GM12878 (cell line): ENCODE measurements at regions of chr17 and their contacts with region 1.

Region 1: DNA sequence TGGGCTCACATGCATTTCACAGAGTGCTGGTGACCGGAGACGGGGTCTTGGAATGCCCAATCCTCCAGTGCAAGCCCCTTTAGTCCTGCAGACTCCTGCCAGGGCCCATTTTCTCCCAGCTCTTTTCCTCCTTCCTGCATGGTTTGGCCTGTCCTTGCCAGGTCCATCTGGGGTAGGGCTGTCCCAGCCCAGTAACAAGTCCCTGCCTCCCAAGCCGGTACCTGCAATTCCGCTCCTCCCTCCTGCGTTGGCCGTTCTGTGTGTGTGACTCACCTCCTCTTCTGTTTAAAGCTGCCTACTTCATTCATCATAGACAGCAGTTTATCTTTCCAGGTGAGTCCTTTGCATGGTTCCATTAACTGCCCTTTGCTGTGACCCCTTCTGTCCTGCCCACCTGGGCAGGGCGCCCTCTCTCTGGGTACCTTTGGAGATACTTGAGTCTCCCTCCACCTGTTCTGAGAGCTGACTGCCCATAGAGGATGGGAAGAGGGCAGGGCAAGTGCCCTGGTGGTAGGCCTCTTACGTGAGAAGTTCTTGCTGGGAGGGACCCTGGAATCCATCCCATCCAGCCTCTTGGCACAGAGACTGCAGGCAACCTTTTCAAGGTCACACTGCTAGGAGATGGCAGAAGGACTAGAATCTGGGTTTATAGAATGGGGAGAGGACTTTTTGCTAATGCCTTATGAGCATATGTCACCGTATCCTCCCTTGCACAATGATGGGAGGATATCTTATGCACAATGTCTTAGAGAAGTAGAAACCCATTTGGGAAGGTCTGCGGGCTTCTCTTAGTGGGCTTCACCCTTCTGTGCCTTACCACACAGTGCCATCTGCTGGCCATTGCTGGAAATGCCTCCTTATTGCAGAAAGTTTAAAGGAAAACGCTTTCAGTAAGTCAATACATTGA is 29.7 kb upstream of the LGALS9 start:
- DNase-seq: peak; percentile 51
- ATAC-seq: peak; percentile 53
- H3K4me3 ChIP-seq: no peak overlapping the region
- H3K27ac ChIP-seq: no peak overlapping the region
- H3K4me1 ChIP-seq: peaks cover 5% of the 10 kb centered on the region; the same call in 1 of the 2 replicates
- H3K27me3 ChIP-seq: no peaks in the 10 kb centered on the region
- CTCF ChIP-seq: peak; percentile 85 to 98 (median 97)
- EP300 ChIP-seq: no peak
- POLR2A ChIP-seq: no peak
- RAD21 ChIP-seq: peak; percentile 95

Region 2: GRCh38 chr17:27293898-27294688 is 307.2 kb before region 1 on chr17 and contains the start of gene WSB1:
- CTCF ChIA-PET with region 1: no interaction called
- POLR2A ChIA-PET with region 1: no interaction called
- RAD21 ChIA-PET with region 1: interaction called, 5 read pairs
- SMC1A ChIA-PET with region 1: interaction called, 3 read pairs
- in situ Hi-C with region 1: no loop called
- intact Hi-C with region 1: loop called (anchors 5 kb)
- DNase-seq: peak; percentile 61
- ATAC-seq: peak; percentile 83
- H3K4me3 ChIP-seq: peak within 1 kb of the TSS; percentile 86
- H3K27ac ChIP-seq: peak within 1 kb of the TSS; percentile 97
- H3K4me1 ChIP-seq: peaks cover 11% of the 10 kb centered on the region
- H3K27me3 ChIP-seq: no peaks in the 10 kb centered on the region
- CTCF ChIP-seq: no peak
- EP300 ChIP-seq: peak; percentile 20 to 57; a peak in 2 of 4 replicates
- POLR2A ChIP-seq: peak; percentile 100
- RAD21 ChIP-seq: no peak
- polyA plus RNA-seq, gene WSB1: 26.6 to 49.8 TPM

Region 3: DNA sequence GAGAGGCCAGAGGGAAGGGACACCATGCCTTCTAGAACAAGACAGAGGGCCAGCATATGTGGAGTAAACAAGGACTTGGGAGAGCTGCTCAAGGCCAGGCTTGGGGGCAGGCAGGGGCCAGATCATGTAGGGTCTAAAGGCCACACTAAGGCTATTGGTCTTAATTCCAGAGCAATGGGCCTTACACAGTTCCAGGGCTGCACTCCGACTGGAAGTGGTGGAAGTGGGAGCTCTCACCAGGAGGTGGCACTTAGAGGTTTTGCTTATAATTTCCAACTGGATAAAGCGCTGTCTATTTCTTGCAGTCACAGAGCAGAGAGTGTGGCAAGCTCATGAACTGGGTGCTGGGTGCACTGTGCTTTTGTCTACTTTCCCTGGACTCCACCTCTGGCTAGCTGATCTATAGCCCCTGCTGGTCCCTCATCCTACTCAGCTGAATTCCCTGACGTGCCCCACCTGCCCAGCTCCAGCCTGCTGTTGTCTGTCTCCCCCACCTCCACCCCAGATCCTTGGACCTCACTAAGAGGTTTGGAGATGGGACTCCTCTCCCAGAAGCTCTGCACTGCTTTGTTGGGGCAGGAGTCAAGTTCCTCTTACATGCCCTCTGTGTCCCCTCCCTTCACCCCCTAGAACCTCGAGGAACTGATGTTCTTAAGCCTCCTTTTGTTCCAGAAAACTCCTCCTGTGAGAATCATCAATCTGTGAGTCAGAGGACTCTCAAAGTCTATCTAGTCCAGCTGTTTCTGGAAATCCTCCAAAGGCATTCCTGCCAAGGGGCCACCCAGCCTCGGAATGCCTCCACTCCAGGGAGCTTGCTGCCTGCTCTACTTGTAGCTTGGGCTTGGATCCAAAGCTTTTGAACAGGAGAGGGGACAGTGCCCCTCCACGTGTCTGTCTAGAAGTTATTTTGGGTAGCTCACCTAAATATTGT is 193.1 kb before region 1 on chr17:
- CTCF ChIA-PET with region 1: interaction called, 16 read pairs
- POLR2A ChIA-PET with region 1: no interaction called
- RAD21 ChIA-PET with region 1: interaction called, 3 read pairs
- SMC1A ChIA-PET with region 1: interaction called, 8 read pairs
- in situ Hi-C with region 1: loop called (anchors 5 kb)
- intact Hi-C with region 1: no loop called
- DNase-seq: no peak
- ATAC-seq: no peak
- H3K4me3 ChIP-seq: no peak overlapping the region
- H3K27ac ChIP-seq: no peak overlapping the region
- H3K4me1 ChIP-seq: peaks cover 2% of the 10 kb centered on the region; the same call in 1 of the 2 replicates
- H3K27me3 ChIP-seq: peaks cover 1 to 3% of the 10 kb centered on the region in 2 experiments; a peak in 1 of 4 replicates
- CTCF ChIP-seq: no peak
- EP300 ChIP-seq: no peak
- POLR2A ChIP-seq: no peak
- RAD21 ChIP-seq: no peak

Region 4: DNA sequence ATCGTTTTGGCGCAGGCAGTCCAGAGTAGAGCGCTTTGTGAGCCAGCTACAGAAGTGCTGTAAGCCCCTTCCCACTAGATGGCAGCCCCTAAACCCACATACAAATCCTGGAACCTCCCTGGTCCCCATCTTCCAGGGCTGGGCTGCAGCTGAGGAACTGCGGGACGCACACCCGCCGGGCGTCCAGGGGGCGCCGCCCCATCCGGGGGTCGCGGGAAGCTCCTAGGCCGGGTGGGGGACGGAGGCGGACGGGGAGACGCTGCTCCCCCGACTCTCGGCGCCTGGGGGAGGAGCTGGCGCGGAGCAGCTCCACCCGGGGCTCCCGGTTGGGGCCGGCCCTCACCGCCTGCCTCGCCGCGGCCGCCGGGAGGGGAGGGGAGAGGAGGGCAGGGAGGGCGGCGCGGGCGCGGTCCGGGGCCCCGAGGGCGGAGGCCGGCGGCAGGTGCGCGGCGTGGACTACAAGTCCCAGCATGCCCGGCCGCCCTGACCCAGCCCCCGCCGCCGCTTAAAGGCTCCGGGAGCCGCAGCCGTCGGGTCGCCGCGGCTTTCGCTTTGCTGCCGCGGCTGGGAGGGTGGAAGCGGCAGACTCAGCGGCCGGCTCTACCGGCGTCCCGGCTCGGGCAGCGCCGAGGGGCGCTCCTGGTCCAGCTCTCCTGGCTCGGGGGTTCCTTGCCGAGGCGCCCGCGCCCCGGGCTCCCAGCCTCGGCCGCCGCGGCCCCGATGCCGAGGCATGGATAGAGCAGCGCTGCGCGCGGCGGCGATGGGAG is 145.2 kb before region 1 on chr17 and contains the start of gene KSR1:
- CTCF ChIA-PET with region 1: interaction called, 56 read pairs
- POLR2A ChIA-PET with region 1: interaction called, 9 read pairs
- RAD21 ChIA-PET with region 1: interaction called, 46 read pairs
- SMC1A ChIA-PET with region 1: interaction called, 76 read pairs
- in situ Hi-C with region 1: loop called (anchors 5 kb)
- intact Hi-C with region 1: loop called (anchors 2 kb)
- DNase-seq: no peak
- ATAC-seq: peak; percentile 89
- H3K4me3 ChIP-seq: peak within 1 kb of the TSS; percentile 89
- H3K27ac ChIP-seq: peak within 1 kb of the TSS; percentile 38
- H3K4me1 ChIP-seq: peaks cover 16% of the 10 kb centered on the region
- H3K27me3 ChIP-seq: no peaks in the 10 kb centered on the region
- CTCF ChIP-seq: peak; percentile 38 to 56 (median 42); a peak in 5 of 6 replicates
- EP300 ChIP-seq: no peak
- POLR2A ChIP-seq: peak; percentile 75
- RAD21 ChIP-seq: peak; percentile 44
- polyA plus RNA-seq, gene KSR1: 0.97 to 1.7 TPM

Region 5: GRCh38 chr17:27494192-27495091 is 106.9 kb before region 1 on chr17:
- CTCF ChIA-PET with region 1: interaction called, 8 read pairs
- POLR2A ChIA-PET with region 1: interaction called, 3 read pairs
- RAD21 ChIA-PET with region 1: no interaction called
- SMC1A ChIA-PET with region 1: interaction called, 13 read pairs
- in situ Hi-C with region 1: no loop called
- intact Hi-C with region 1: no loop called
- DNase-seq: no peak
- ATAC-seq: no peak; the same call in 2 of the 3 replicates
- H3K4me3 ChIP-seq: no peak overlapping the region
- H3K27ac ChIP-seq: peak overlapping the region; percentile 80; the same call in 1 of the 2 replicates
- H3K4me1 ChIP-seq: peaks cover 43% of the 10 kb centered on the region
- H3K27me3 ChIP-seq: no peaks in the 10 kb centered on the region
- CTCF ChIP-seq: peak in 1 of 3 experiments; percentile 24; a peak in 2 of 6 replicates
- EP300 ChIP-seq: no peak
- POLR2A ChIP-seq: no peak
- RAD21 ChIP-seq: no peak

Region 6: DNA sequence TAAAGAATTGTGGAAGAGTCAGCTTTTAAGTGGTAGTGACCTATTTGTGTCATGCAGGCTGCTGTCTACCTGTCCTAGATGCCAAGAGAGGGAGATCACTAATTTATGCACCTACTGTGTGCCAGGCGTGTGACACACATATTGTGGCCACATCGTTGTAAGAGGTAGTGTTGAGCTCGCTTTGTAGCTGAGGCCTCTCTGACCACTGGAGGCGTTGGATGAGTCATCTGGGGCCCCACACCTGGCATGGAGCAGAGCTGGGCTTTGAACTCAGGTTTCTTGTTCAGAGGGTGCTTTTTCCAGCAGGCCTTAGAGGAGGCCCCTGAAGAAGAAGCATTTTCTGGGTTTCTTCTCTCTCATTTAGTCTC is 22.6 kb before region 1 on chr17:
- CTCF ChIA-PET with region 1: interaction called, 34 read pairs
- POLR2A ChIA-PET with region 1: no interaction called
- RAD21 ChIA-PET with region 1: interaction called, 11 read pairs
- SMC1A ChIA-PET with region 1: interaction called, 17 read pairs
- in situ Hi-C with region 1: no loop called
- intact Hi-C with region 1: no loop called
- DNase-seq: peak; percentile 57
- ATAC-seq: peak; percentile 94
- H3K4me3 ChIP-seq: no peak overlapping the region
- H3K27ac ChIP-seq: peak overlapping the region; percentile 67
- H3K4me1 ChIP-seq: peaks cover 30% of the 10 kb centered on the region
- H3K27me3 ChIP-seq: no peaks in the 10 kb centered on the region
- CTCF ChIP-seq: peak in 2 of 3 experiments; percentile 13 to 23; a peak in 2 of 6 replicates
- EP300 ChIP-seq: peak; percentile 53 to 82; a peak in 3 of 4 replicates
- POLR2A ChIP-seq: no peak
- RAD21 ChIP-seq: 0 out of 2 replicates have a peak, but pooled peaks have one; percentile 7

Region 7: GRCh38 chr17:27654654-27655524 is 53.6 kb after region 1 on chr17:
- CTCF ChIA-PET with region 1: interaction called, 134 read pairs
- POLR2A ChIA-PET with region 1: no interaction called
- RAD21 ChIA-PET with region 1: interaction called, 16 read pairs
- SMC1A ChIA-PET with region 1: interaction called, 7 read pairs
- in situ Hi-C with region 1: loop called (anchors 10 kb)
- intact Hi-C with region 1: loop called (anchors 2 kb)
- DNase-seq: peak; percentile 25
- ATAC-seq: peak; percentile 98
- H3K4me3 ChIP-seq: no peak overlapping the region
- H3K27ac ChIP-seq: no peak overlapping the region
- H3K4me1 ChIP-seq: no peaks in the 10 kb centered on the region
- H3K27me3 ChIP-seq: no peaks in the 10 kb centered on the region
- CTCF ChIP-seq: peak; percentile 67 to 90 (median 81)
- EP300 ChIP-seq: no peak
- POLR2A ChIP-seq: no peak
- RAD21 ChIP-seq: peak; percentile 57

Region 8: GRCh38 chr17:27721797-27722196 is 120.5 kb after region 1 on chr17:
- CTCF ChIA-PET with region 1: no interaction called
- POLR2A ChIA-PET with region 1: no interaction called
- RAD21 ChIA-PET with region 1: no interaction called
- SMC1A ChIA-PET with region 1: no interaction called
- in situ Hi-C with region 1: no loop called
- intact Hi-C with region 1: no loop called
- DNase-seq: no peak
- ATAC-seq: no peak
- H3K4me3 ChIP-seq: no peak overlapping the region
- H3K27ac ChIP-seq: no peak overlapping the region
- H3K4me1 ChIP-seq: no peaks in the 10 kb centered on the region
- H3K27me3 ChIP-seq: no peaks in the 10 kb centered on the region; a peak in 1 of 4 replicates
- CTCF ChIP-seq: no peak
- EP300 ChIP-seq: no peak
- POLR2A ChIP-seq: no peak
- RAD21 ChIP-seq: no peak

Region 9: DNA sequence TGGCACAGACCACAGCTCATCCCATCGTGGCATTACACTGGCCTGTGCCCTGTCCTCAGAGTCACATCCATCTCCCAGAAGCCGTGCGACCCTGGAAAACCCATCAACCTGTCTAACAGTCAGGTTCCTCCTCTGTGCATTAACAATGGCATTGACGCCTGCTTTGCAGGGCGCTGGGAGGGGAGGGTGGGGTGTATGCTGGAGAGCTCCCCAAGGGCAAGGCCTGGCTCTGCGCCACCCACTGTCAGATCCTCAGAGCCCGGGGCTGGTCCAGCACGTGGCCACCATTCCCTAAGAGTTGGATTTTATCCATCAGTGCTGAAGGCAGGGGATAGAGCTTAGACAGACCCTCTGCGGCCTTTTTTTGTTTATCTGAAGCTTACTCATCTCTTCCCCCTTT is 170.3 kb after region 1 on chr17:
- CTCF ChIA-PET with region 1: no interaction called
- POLR2A ChIA-PET with region 1: no interaction called
- RAD21 ChIA-PET with region 1: no interaction called
- SMC1A ChIA-PET with region 1: no interaction called
- in situ Hi-C with region 1: no loop called
- intact Hi-C with region 1: no loop called
- DNase-seq: no peak
- ATAC-seq: no peak
- H3K4me3 ChIP-seq: no peak overlapping the region
- H3K27ac ChIP-seq: no peak overlapping the region
- H3K4me1 ChIP-seq: no peaks in the 10 kb centered on the region
- H3K27me3 ChIP-seq: no peaks in the 10 kb centered on the region; a peak in 2 of 4 replicates
- CTCF ChIP-seq: no peak
- EP300 ChIP-seq: no peak
- POLR2A ChIP-seq: no peak
- RAD21 ChIP-seq: no peak